Gastrocnemius medialis (tissue), 4 donors: ENCODE measurements at regions of chr14 and their contacts with region 1.

Region 1: GRCh38 chr14:73576391-73576790 is 7.4 kb downstream of the ACOT2 start:
- DNase-seq: no peak
- ATAC-seq: no peak
- H3K4me3 ChIP-seq: no peak overlapping the region
- H3K27ac ChIP-seq: no peak overlapping the region
- H3K4me1 ChIP-seq: peaks cover 0 to 9% of the 10 kb centered on the region in 2 donors
- H3K27me3 ChIP-seq: no peaks in the 10 kb centered on the region
- CTCF ChIP-seq: no peak
- POLR2A ChIP-seq: no peak

Region 2: DNA sequence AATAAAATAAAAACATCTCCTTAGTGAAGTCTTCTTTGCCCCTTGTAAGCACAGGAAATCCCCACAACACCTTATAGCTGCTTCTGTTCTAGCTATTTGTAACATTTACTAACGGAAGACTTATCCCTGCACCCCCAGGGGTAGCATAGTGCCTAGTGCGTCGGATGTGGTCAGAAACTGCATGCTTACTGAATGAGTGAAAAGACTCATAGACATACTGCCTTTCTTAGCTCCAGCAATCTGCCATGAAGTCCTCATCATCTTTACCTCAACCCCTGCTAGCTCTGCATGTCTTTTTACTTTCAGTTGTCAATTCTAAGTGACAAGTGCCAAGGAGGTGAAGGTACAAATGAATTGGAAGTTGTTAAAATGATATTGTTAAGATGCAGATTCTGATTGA is 72.7 kb before region 1 on chr14:
- in situ Hi-C with region 1: loop called in 1 of 4 experiments (anchors 10 kb)
- intact Hi-C with region 1: loop called (anchors 2 kb)
- DNase-seq: no peak
- ATAC-seq: no peak
- H3K4me3 ChIP-seq: no peak overlapping the region
- H3K27ac ChIP-seq: no peak overlapping the region
- H3K4me1 ChIP-seq: no peaks in the 10 kb centered on the region
- H3K27me3 ChIP-seq: no peaks in the 10 kb centered on the region
- CTCF ChIP-seq: no peak
- POLR2A ChIP-seq: no peak

Region 3: GRCh38 chr14:73526569-73526968 is 49.8 kb before region 1 on chr14:
- in situ Hi-C with region 1: loop called in 1 of 4 experiments (anchors 10 kb)
- intact Hi-C with region 1: no loop called
- DNase-seq: no peak
- ATAC-seq: peak; percentile 36 to 60
- H3K4me3 ChIP-seq: no peak overlapping the region
- H3K27ac ChIP-seq: peak overlapping the region; percentile 14 to 33 (median 22)
- H3K4me1 ChIP-seq: peaks cover 11 to 16% of the 10 kb centered on the region in 2 donors
- H3K27me3 ChIP-seq: no peaks in the 10 kb centered on the region
- CTCF ChIP-seq: no peak
- POLR2A ChIP-seq: no peak